ENCODE measurements at regions of chr7 and their contacts with region 1.

Region 1: DNA sequence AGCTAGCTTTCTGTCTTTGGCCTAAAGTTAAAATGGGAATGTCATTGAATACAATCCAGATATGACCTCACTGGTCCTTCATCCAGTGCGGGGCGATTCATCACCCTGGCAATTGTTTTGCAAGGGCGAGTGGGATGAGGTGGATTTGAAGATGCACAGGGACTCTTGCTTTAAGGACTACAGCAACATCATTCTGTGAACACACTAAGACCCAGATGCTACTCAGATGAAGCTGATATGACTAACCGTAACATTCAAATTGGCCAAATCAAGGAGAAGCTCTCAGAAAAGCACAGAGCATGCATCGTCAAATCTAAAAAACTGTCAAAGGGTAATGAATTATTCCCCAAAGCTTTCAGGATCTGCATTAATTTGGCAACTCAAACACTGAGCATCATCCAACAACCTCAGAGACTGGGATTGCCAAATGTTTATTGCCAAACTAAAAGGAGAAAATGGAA is 12.8 kb downstream of the CPA1 start:
- DNase-seq: no peak
- H3K4me3 ChIP-seq: no peak overlapping the region
- H3K27ac ChIP-seq: no peak overlapping the region
- H3K4me1 ChIP-seq: no peaks in the 10 kb centered on the region
- H3K27me3 ChIP-seq: no peaks in the 10 kb centered on the region
- CTCF ChIP-seq: no peak

Region 2: GRCh38 chr7:130063036-130063435 is 330.1 kb before region 1 on chr7:
- CTCF ChIA-PET with region 1: interaction called, 14 read pairs
- POLR2A ChIA-PET with region 1: no interaction called
- intact Hi-C with region 1: no loop called
- DNase-seq: peak in 1 of 2 experiments; percentile 59
- H3K4me3 ChIP-seq: no peak overlapping the region
- H3K27ac ChIP-seq: no peak overlapping the region
- H3K4me1 ChIP-seq: no peaks in the 10 kb centered on the region
- H3K27me3 ChIP-seq: no peaks in the 10 kb centered on the region
- CTCF ChIP-seq: peak; percentile 93

Region 3: DNA sequence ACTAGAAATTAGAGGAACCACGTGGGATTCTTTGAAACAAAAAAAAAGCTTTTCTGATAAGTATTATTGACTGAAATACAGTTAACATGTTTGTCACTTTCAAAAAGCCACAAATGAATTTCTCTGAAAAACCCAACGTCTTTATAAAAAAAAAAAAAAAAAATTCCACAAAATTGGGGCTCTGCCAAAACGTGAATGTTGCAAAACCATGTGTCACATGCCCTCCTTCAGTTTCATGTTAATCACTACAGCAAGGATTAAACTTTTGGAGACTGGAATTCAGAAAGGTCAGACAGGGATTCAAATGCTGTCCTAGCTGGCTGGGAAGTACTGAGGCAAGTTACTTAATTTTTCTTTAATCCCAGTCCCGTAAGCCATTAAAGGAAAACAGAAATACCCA is 618.8 kb after region 1 on chr7:
- CTCF ChIA-PET with region 1: no interaction called
- POLR2A ChIA-PET with region 1: no interaction called
- intact Hi-C with region 1: no loop called
- DNase-seq: peak; percentile 29 to 80
- H3K4me3 ChIP-seq: no peak overlapping the region
- H3K27ac ChIP-seq: peak overlapping the region; percentile 60
- H3K4me1 ChIP-seq: peaks cover 99% of the 10 kb centered on the region
- H3K27me3 ChIP-seq: no peaks in the 10 kb centered on the region
- CTCF ChIP-seq: no peak